Activated CD4-positive, alpha-beta T cell treated with anti-CD3 and anti-CD28 coated beads for 36 hours (primary cell): ENCODE measurements at regions of chr4 and their contacts with region 1.

Region 1: GRCh38 chr4:147096667-147097604 is 151.3 kb upstream of the TTC29 start:
- DNase-seq: no peak
- ATAC-seq: no peak
- H3K4me3 Mint-ChIP-seq: no peak overlapping the region
- H3K27ac Mint-ChIP-seq: no peak overlapping the region
- H3K4me1 Mint-ChIP-seq: no peaks in the 10 kb centered on the region
- H3K27me3 Mint-ChIP-seq: peaks cover 17% of the 10 kb centered on the region

Region 2: DNA sequence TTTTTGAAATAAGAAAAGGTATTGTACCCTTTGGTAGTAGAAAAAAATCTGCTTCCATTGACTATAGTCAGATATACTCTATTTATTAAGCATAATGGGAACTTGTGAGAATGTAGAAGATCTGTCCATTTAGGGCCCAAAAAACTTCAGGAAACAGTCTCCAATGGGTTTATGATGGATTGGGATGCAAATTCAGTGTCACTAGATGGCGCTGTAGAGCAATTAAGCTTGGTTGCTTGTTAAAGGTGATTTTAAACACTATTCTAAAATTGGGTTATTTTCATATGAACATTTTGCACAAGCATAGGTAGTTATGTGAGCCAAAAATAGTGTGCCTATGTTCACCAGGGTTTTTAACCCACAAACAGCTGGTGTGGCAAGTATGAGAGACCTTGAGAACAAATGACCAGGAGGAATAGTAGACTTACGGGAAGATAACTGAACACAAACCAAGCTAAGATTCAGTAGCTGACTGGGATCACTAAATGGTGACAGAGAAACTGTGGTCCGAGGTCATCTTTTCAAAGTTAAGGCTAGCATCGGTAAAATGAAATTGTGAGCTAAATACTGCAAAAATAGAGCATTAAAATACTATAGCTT is 1001.7 kb before region 1 on chr4:
- CTCF ChIA-PET with region 1: interaction called, 6 read pairs
- POLR2A ChIA-PET with region 1: no interaction called
- intact Hi-C with region 1: loop called (anchors 10 kb)
- DNase-seq: peak; percentile 46
- ATAC-seq: no peak
- H3K4me3 Mint-ChIP-seq: no peak overlapping the region
- H3K27ac Mint-ChIP-seq: no peak overlapping the region
- H3K4me1 Mint-ChIP-seq: no peaks in the 10 kb centered on the region
- H3K27me3 Mint-ChIP-seq: peaks cover 7% of the 10 kb centered on the region

Region 3: GRCh38 chr4:146916479-146917076 is 180.4 kb before region 1 on chr4:
- CTCF ChIA-PET with region 1: interaction called, 5 read pairs
- POLR2A ChIA-PET with region 1: no interaction called
- intact Hi-C with region 1: loop called in 1 of 2 experiments (anchors 5 kb)
- DNase-seq: peak; percentile 23
- ATAC-seq: no peak
- H3K4me3 Mint-ChIP-seq: no peak overlapping the region
- H3K27ac Mint-ChIP-seq: no peak overlapping the region
- H3K4me1 Mint-ChIP-seq: no peaks in the 10 kb centered on the region
- H3K27me3 Mint-ChIP-seq: peaks cover 8% of the 10 kb centered on the region

Region 4: DNA sequence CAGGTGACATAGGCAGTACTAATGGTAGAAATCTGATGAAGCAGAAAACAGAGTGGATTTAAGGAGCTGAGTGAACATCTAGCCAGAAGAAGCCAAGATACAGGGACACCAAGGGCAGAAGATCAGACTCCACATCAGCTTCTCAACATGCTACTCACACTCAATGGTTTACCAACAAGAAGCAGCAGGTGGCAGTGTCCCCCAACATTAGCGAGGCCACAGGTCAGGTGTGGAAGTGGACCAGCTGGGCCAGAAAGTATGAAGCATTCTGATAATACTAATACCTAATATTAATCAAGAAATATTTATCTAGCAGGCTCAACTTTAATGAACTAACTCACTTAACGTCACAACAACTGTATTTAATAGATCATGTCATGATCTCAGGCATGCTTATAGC is 77.9 kb before region 1 on chr4:
- CTCF ChIA-PET with region 1: interaction called, 122 read pairs
- POLR2A ChIA-PET with region 1: no interaction called
- intact Hi-C with region 1: loop called (anchors 1 kb)
- DNase-seq: peak; percentile 71
- ATAC-seq: no peak
- H3K4me3 Mint-ChIP-seq: no peak overlapping the region
- H3K27ac Mint-ChIP-seq: no peak overlapping the region
- H3K4me1 Mint-ChIP-seq: no peaks in the 10 kb centered on the region
- H3K27me3 Mint-ChIP-seq: peaks cover 2% of the 10 kb centered on the region

Region 5: GRCh38 chr4:147044241-147044640 is 52.7 kb before region 1 on chr4:
- CTCF ChIA-PET with region 1: interaction called, 11 read pairs
- POLR2A ChIA-PET with region 1: no interaction called
- intact Hi-C with region 1: no loop called
- DNase-seq: no peak
- ATAC-seq: no peak
- H3K4me3 Mint-ChIP-seq: no peak overlapping the region
- H3K27ac Mint-ChIP-seq: no peak overlapping the region
- H3K4me1 Mint-ChIP-seq: no peaks in the 10 kb centered on the region
- H3K27me3 Mint-ChIP-seq: peaks cover 29% of the 10 kb centered on the region

Region 6: DNA sequence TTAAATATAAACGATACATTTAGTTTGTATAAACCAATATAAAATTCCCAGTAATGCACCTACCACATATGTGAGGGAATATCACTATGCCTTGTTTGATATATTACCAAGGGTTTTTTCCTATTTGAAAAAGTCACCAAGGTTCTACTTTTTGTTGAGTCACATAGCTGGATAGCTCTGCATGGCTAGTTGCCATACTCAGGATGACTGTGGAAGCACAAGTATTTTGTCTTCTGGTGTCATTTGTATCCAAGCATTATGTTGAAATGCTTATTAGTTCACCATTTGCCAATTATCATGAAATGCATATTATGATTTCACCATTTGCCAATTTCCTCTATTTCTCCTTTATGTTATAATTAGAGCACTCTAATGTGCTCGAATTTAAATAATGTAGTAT is 11.5 kb after region 1 on chr4:
- CTCF ChIA-PET with region 1: interaction called, 16 read pairs
- POLR2A ChIA-PET with region 1: no interaction called
- intact Hi-C with region 1: no loop called
- DNase-seq: no peak
- ATAC-seq: no peak
- H3K4me3 Mint-ChIP-seq: no peak overlapping the region
- H3K27ac Mint-ChIP-seq: no peak overlapping the region
- H3K4me1 Mint-ChIP-seq: no peaks in the 10 kb centered on the region
- H3K27me3 Mint-ChIP-seq: peaks cover 4% of the 10 kb centered on the region

Region 7: GRCh38 chr4:147371661-147372060 is 274.7 kb after region 1 on chr4:
- CTCF ChIA-PET with region 1: no interaction called
- POLR2A ChIA-PET with region 1: no interaction called
- intact Hi-C with region 1: no loop called
- DNase-seq: no peak
- ATAC-seq: no peak
- H3K4me3 Mint-ChIP-seq: no peak overlapping the region
- H3K27ac Mint-ChIP-seq: no peak overlapping the region
- H3K4me1 Mint-ChIP-seq: no peaks in the 10 kb centered on the region
- H3K27me3 Mint-ChIP-seq: no peaks in the 10 kb centered on the region

Region 8: DNA sequence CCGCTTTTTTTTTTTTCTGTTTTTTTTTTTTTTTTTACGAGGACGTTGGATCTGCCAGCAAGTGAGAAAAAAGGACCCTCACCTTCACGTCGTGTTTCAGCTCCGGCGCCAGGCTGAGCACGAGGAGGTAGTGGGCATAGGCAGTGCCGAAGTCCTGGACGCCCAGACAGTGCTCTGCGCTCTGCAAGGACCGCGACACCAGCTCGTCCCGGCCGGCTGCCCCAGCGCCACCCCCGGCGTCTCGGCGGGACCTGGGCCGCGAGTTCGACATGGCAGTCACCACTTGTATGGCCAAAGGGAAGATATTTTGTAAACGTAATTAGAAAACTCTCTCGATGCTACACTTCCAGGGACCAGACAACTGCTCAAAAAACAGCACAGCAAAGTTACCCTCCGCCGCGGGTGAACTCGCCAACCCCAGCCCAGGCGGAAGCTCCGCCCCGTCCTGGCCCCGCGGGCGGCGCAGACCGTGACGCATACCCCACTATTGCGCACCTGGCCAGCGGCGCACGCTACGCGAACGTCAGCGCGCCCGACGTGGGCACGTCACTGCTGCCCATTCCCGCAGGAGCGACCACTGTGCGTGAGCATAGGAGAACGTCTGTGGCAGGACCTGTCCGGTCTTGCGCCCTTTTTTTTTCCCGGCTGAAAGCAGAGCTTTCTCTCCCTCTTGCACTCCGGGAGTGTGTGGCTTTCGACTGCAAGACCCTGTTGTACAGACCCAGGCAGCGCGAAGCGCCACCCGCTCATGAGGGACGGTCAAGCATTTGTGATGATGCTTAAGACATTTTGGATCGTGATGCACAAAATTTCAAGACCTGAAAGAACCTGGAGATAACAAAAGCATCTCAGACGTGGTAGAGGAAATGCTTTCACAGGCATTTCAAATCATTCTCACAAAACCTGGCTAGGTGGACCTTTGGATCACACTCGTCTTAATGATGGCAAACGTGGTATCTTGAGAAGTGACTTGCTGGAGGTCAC is 587.1 kb after region 1 on chr4 and contains the start of gene PRMT9:
- CTCF ChIA-PET with region 1: no interaction called
- POLR2A ChIA-PET with region 1: no interaction called
- intact Hi-C with region 1: no loop called
- DNase-seq: peak; percentile 93
- ATAC-seq: peak; percentile 99
- H3K4me3 Mint-ChIP-seq: peak within 1 kb of the TSS; percentile 92
- H3K27ac Mint-ChIP-seq: peak within 1 kb of the TSS; percentile 91
- H3K4me1 Mint-ChIP-seq: peaks cover 25% of the 10 kb centered on the region
- H3K27me3 Mint-ChIP-seq: peaks cover 6% of the 10 kb centered on the region
- total RNA-seq, gene PRMT9: 6.2 to 7.5 TPM